Vagina (tissue), 2 donors: ENCODE measurements at regions of chr10 and their contacts with region 1.

Region 1: GRCh38 chr10:4656576-4657182 is 169.3 kb upstream of the AKR1E2 start:
- DNase-seq: no peak
- H3K4me3 ChIP-seq: no peak overlapping the region
- H3K27ac ChIP-seq: no peak overlapping the region
- H3K4me1 ChIP-seq: peaks cover 37% of the 10 kb centered on the region
- H3K27me3 ChIP-seq: no peaks in the 10 kb centered on the region
- CTCF ChIP-seq: peak; percentile 63 to 89 (median 88)
- POLR2A ChIP-seq: no peak

Region 2: DNA sequence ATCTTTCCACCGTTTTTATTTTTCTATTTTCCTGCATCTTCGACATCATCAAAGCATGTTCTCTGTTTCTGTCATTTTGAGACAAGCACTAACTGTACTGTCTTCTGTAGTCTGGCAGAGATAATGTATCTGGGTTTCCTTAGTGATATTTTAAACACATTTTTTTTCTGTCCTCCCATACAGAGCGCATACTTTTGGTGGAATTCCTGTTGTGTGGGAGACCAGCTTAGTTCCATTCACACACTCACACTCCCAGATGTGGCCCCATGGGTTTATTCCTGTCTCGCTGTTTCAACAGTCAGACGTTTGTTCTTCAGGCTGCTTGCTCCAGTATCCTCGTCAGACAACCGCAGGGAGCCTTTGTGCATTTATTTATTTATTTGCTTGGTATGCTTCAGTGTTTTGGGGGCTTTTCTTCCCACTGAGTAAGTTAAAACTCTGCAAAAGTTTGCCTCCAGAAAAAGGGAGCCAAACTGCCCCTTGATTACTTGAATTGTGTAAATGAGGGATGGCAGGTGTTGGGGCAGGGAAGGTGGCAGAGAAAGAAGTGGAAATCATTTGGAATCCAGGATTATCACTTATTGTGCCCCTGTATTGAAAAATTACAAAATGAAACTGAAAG is 414.8 kb before region 1 on chr10:
- intact Hi-C with region 1: loop called (anchors 10 kb)
- DNase-seq: no peak
- H3K4me3 ChIP-seq: peak overlapping the region; percentile 9 to 15
- H3K27ac ChIP-seq: peak overlapping the region; percentile 75
- H3K4me1 ChIP-seq: peaks cover 23% of the 10 kb centered on the region
- H3K27me3 ChIP-seq: no peaks in the 10 kb centered on the region
- CTCF ChIP-seq: no peak
- POLR2A ChIP-seq: no peak

Region 3: DNA sequence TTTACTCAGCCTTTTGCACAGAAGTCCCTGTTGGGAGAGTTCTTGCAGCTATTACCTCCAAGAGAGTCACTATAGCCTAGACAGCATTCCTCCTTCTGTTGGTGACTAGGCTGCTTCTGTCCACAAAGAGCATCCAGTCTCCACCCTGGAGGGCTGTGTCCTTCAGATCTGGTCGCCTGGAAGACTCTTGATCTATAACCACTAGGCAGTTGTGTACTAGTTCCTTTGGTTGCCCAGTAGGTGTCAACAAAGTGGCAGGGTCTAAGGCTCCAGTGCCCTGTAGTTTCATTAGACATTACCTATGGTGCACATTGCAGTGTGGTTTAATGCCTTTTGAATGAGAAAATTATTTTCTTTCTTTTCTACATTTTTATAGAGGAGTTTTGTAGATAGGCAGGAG is 358.3 kb after region 1 on chr10:
- intact Hi-C with region 1: no loop called
- DNase-seq: no peak
- H3K4me3 ChIP-seq: no peak overlapping the region
- H3K27ac ChIP-seq: no peak overlapping the region
- H3K4me1 ChIP-seq: peaks cover 18% of the 10 kb centered on the region
- H3K27me3 ChIP-seq: no peaks in the 10 kb centered on the region
- CTCF ChIP-seq: no peak
- POLR2A ChIP-seq: no peak